Esophagus muscularis mucosa (tissue), 4 donors: ENCODE measurements at regions of chr22 and their contacts with region 1.

Region 1: GRCh38 chr22:18077639-18078328 is at the start of gene PEX26:
- DNase-seq: peak; percentile 98
- H3K4me3 ChIP-seq: peak within 1 kb of the TSS; percentile 71 to 93 (median 80)
- H3K27ac ChIP-seq: peak within 1 kb of the TSS; percentile 81 to 90 (median 83)
- H3K4me1 ChIP-seq: peaks cover 28 to 46% (median 43%) of the 10 kb centered on the region in 4 donors
- H3K27me3 ChIP-seq: no peaks in the 10 kb centered on the region
- CTCF ChIP-seq: peak in 1 of 3 experiments; percentile 19
- EP300 ChIP-seq: no peak
- POLR2A ChIP-seq: peak; percentile 48
- total RNA-seq, gene PEX26: 19.7 to 54.2 (median 33.6) TPM

Region 2: GRCh38 chr22:17830043-17830961 is 247.5 kb before region 1 on chr22:
- intact Hi-C with region 1: loop called (anchors 2 kb)
- DNase-seq: peak; percentile 98
- H3K4me3 ChIP-seq: no peak overlapping the region
- H3K27ac ChIP-seq: peak overlapping the region; percentile 76 to 88 (median 85)
- H3K4me1 ChIP-seq: peaks cover 38 to 55% (median 48%) of the 10 kb centered on the region in 4 donors
- H3K27me3 ChIP-seq: no peaks in the 10 kb centered on the region
- CTCF ChIP-seq: peak; percentile 99 to 100 (median 100)
- EP300 ChIP-seq: peak; percentile 14
- POLR2A ChIP-seq: no peak

Region 3: GRCh38 chr22:17891481-17892167 is 186.2 kb before region 1 on chr22:
- intact Hi-C with region 1: loop called (anchors 5 kb)
- DNase-seq: no peak
- H3K4me3 ChIP-seq: no peak overlapping the region
- H3K27ac ChIP-seq: peak overlapping the region; percentile 69 to 82 (median 78)
- H3K4me1 ChIP-seq: peaks cover 25 to 38% (median 31%) of the 10 kb centered on the region in 4 donors
- H3K27me3 ChIP-seq: no peaks in the 10 kb centered on the region
- CTCF ChIP-seq: peak; percentile 61 to 67 (median 63)
- EP300 ChIP-seq: no peak
- POLR2A ChIP-seq: no peak

Region 4: GRCh38 chr22:17910561-17911311 is 167.0 kb before region 1 on chr22:
- intact Hi-C with region 1: loop called (anchors 5 kb)
- DNase-seq: no peak
- H3K4me3 ChIP-seq: no peak overlapping the region
- H3K27ac ChIP-seq: peak overlapping the region; percentile 69 to 88 (median 86)
- H3K4me1 ChIP-seq: peaks cover 40 to 83% (median 75%) of the 10 kb centered on the region in 4 donors
- H3K27me3 ChIP-seq: no peaks in the 10 kb centered on the region
- CTCF ChIP-seq: peak; percentile 31 to 53 (median 34)
- EP300 ChIP-seq: peak; percentile 31
- POLR2A ChIP-seq: no peak

Region 5: DNA sequence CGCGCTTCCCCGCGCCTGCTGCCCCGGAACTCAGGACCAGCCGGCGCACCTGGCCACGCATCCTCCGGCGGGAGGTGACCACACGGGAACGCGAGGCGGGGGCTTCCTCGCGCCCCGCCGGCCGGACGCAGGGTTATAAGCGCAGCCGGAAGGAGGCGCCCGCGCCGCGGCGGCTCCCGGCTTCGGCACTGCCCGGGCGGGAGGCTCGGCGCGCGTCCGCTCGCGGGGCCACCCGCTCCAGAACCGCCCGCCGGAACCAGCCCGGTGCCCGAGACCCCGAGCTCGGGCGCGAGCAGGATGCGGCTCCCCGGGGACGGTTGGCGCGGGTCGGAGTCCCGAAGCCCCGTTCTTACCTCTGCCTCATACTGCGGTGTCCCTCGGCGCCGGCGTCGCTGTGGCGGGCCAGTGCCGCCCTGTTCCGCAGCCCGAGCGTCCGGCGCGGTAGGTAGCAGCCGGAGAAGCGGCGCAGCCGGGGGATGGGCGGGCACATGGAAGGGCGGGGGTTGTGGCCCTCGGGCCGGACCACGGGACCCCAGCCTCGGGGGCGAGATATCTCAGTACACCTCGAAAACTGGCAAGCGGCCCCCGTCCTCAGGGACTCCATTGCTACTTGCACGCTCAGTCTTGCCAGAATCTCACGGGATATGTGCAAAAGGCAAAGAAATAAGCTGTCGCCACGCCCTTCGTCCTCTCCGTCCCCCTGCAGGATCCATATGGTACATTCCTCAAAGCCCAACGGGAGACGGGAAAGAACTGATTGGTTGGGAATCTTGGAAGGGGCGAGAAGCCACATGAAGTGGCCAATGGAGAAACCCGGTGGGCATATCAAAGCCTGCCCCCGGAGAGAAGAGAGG is 76.5 kb before region 1 on chr22:
- intact Hi-C with region 1: loop called (anchors 2 kb)
- DNase-seq: peak; percentile 95
- H3K4me3 ChIP-seq: peak overlapping the region; percentile 77 to 94 (median 89)
- H3K27ac ChIP-seq: peak overlapping the region; percentile 89 to 95 (median 92)
- H3K4me1 ChIP-seq: peaks cover 31 to 55% (median 50%) of the 10 kb centered on the region in 4 donors
- H3K27me3 ChIP-seq: no peaks in the 10 kb centered on the region
- CTCF ChIP-seq: peak; percentile 56 to 70 (median 59)
- EP300 ChIP-seq: no peak
- POLR2A ChIP-seq: peak; percentile 75

Region 6: DNA sequence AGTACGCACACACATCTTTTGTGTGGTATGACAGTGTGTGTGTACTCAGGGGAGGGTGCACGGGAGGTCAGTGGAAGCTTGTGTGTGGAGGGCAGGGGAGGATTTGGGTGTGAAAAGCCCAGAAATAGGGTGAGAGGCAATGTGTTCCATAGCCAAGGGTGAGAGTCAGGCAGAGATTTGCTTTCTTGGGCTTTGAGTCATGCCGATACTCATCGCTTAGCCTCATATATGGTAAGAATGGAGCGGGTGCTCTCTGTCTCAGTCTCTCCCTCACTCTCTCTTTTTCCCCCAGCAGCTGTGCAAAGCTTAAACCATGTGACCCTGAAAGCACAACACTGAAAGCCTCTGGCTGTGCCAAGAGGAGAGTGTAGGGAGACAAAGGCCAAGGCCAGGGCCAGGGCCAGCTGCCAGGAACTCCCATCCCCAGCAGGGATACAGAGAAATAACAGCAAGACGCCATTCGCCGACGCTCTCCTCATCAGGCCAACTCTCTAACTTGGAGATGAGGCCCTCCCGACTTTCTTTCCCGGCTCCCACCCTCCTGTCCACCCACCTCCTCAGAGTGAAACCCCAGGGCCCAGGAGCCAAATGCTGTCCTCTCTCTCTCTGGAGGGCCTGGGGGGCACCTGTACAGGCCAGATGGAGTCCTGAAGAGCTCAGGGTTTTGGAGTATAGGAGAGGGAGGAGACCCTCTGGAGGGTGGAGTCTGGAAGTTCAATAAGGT is 33.1 kb before region 1 on chr22:
- intact Hi-C with region 1: no loop called
- DNase-seq: no peak
- H3K4me3 ChIP-seq: no peak overlapping the region
- H3K27ac ChIP-seq: peak overlapping the region; percentile 57 to 65 (median 62)
- H3K4me1 ChIP-seq: peaks cover 16 to 21% (median 20%) of the 10 kb centered on the region in 4 donors
- H3K27me3 ChIP-seq: no peaks in the 10 kb centered on the region
- CTCF ChIP-seq: no peak
- EP300 ChIP-seq: no peak
- POLR2A ChIP-seq: no peak